ENCODE measurements at regions of chr7 and their contacts with region 1.

Region 1: GRCh38 chr7:150378853-150379440 is at the start of gene ZNF775:
- DNase-seq: peak; percentile 90
- ATAC-seq: peak; percentile 93
- H3K4me3 Mint-ChIP-seq: peak within 1 kb of the TSS; percentile 90
- H3K27ac Mint-ChIP-seq: peak within 1 kb of the TSS; percentile 88
- H3K4me1 Mint-ChIP-seq: peaks cover 80% of the 10 kb centered on the region
- H3K27me3 Mint-ChIP-seq: no peaks in the 10 kb centered on the region
- CTCF ChIP-seq: no peak
- total RNA-seq, gene ZNF775: 8.0 and 8.8 TPM in 2 replicates

Region 2: GRCh38 chr7:149822353-149822943 is 556.5 kb before region 1 on chr7:
- CTCF ChIA-PET with region 1: no interaction called
- POLR2A ChIA-PET with region 1: no interaction called
- intact Hi-C with region 1: no loop called
- DNase-seq: no peak
- ATAC-seq: no peak
- H3K4me3 Mint-ChIP-seq: no peak overlapping the region
- H3K27ac Mint-ChIP-seq: no peak overlapping the region
- H3K4me1 Mint-ChIP-seq: no peaks in the 10 kb centered on the region
- H3K27me3 Mint-ChIP-seq: no peaks in the 10 kb centered on the region
- CTCF ChIP-seq: no peak

Region 3: DNA sequence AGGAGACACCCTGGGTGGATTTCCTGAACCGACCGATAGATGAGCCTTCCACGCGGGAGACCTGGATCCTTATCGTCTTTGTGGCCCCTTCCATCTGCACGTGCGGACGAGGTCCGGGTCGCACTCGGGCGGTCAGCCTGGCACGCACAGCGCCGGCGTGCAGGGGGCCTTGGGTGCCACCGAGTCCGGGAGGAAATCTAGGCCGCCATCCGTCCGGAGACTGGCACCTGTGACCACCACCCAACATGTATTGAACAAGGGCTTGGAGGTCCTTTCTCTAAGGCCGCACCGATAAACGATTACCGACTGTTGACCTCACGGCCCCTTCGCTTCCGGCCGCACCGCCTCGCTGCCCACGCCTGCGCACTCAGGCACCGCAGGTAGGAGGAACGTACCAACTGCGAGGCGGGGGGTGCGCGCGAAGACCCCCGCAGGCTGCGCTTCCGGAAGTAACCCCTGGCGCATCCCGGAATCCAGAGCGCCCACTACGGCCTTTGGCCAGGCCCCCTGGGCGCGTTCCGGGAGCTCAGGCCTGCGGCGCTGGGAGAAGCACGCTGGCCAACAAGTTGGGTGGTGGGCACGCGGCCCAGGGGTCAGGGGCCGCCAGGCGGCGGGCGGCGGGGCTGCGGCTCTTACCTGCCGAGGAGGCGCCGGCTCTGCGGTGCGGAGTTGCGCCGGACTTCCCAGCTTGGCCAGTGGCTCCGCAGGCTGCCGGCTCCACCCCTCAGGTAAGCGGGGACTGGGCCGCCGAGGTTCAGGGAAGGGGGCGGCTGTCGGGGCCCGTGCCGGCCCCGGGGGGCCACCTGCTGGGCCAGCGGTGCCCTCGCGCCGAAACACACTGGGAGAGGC is 55.9 kb before region 1 on chr7 and contains the starts of genes ACTR3C and LRRC61:
- CTCF ChIA-PET with region 1: no interaction called
- POLR2A ChIA-PET with region 1: interaction called, 9 read pairs
- intact Hi-C with region 1: loop called (anchors 1 kb)
- DNase-seq: peak; percentile 64
- ATAC-seq: peak; percentile 67
- H3K4me3 Mint-ChIP-seq: peak within 1 kb of the TSS; percentile 93
- H3K27ac Mint-ChIP-seq: peak within 1 kb of the TSS; percentile 92
- H3K4me1 Mint-ChIP-seq: peaks cover 54% of the 10 kb centered on the region
- H3K27me3 Mint-ChIP-seq: no peaks in the 10 kb centered on the region
- CTCF ChIP-seq: no peak
- total RNA-seq, gene ACTR3C: 10.1 and 14.3 TPM in 2 replicates
- total RNA-seq, gene LRRC61: 10.7 and 11.0 TPM in 2 replicates

Region 4: GRCh38 chr7:150368096-150368883 is 10.7 kb before region 1 on chr7 and contains the start of gene REPIN1:
- CTCF ChIA-PET with region 1: interaction called, 6 read pairs
- POLR2A ChIA-PET with region 1: interaction called, 188 read pairs
- intact Hi-C with region 1: loop called (anchors 1 kb)
- DNase-seq: peak; percentile 85
- ATAC-seq: peak; percentile 43
- H3K4me3 Mint-ChIP-seq: peak within 1 kb of the TSS; percentile 95
- H3K27ac Mint-ChIP-seq: peak within 1 kb of the TSS; percentile 95
- H3K4me1 Mint-ChIP-seq: peaks cover 72% of the 10 kb centered on the region
- H3K27me3 Mint-ChIP-seq: no peaks in the 10 kb centered on the region
- CTCF ChIP-seq: no peak
- total RNA-seq, gene REPIN1: 106 and 116 TPM in 2 replicates

Region 5: GRCh38 chr7:150435390-150436073 is 56.6 kb after region 1 on chr7:
- CTCF ChIA-PET with region 1: no interaction called
- POLR2A ChIA-PET with region 1: interaction called, 4 read pairs
- intact Hi-C with region 1: loop called (anchors 1 kb)
- DNase-seq: peak; percentile 74
- ATAC-seq: peak; percentile 92
- H3K4me3 Mint-ChIP-seq: peak overlapping the region; percentile 73
- H3K27ac Mint-ChIP-seq: peak overlapping the region; percentile 96
- H3K4me1 Mint-ChIP-seq: peaks cover 63% of the 10 kb centered on the region
- H3K27me3 Mint-ChIP-seq: peaks cover 2% of the 10 kb centered on the region
- CTCF ChIP-seq: no peak

Region 6: DNA sequence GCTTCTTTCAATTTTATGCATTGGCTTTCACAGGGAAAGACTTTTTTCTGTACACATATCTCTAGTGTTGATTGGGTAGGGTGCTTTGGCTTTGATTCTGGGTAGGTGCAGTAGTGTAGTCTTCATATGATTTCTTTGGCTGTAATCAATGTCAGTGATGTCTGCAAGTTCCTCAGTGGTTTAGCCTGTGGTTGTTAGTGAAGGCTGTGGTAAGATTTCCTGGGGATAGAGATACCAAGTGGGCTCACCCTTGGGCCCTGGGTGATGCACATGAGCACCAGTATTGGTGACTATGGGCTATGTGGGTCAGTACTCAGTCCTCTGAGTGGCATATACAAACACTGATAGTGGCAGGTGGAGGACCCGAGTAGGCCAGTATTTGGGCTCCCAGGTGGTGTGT is 84.5 kb after region 1 on chr7:
- CTCF ChIA-PET with region 1: no interaction called
- POLR2A ChIA-PET with region 1: no interaction called
- intact Hi-C with region 1: no loop called
- DNase-seq: no peak
- ATAC-seq: no peak
- H3K4me3 Mint-ChIP-seq: no peak overlapping the region
- H3K27ac Mint-ChIP-seq: no peak overlapping the region
- H3K4me1 Mint-ChIP-seq: no peaks in the 10 kb centered on the region
- H3K27me3 Mint-ChIP-seq: peaks cover 3% of the 10 kb centered on the region
- CTCF ChIP-seq: no peak

Region 7: GRCh38 chr7:151080522-151081169 is 701.7 kb after region 1 on chr7 and contains the start of gene FASTK:
- CTCF ChIA-PET with region 1: no interaction called
- POLR2A ChIA-PET with region 1: no interaction called
- intact Hi-C with region 1: loop called (anchors 2 kb)
- DNase-seq: peak; percentile 81
- ATAC-seq: peak; percentile 83
- H3K4me3 Mint-ChIP-seq: peak within 1 kb of the TSS; percentile 91
- H3K27ac Mint-ChIP-seq: peak within 1 kb of the TSS; percentile 70
- H3K4me1 Mint-ChIP-seq: peaks cover 49% of the 10 kb centered on the region
- H3K27me3 Mint-ChIP-seq: peaks cover 8% of the 10 kb centered on the region
- CTCF ChIP-seq: no peak
- total RNA-seq, gene FASTK: 97.6 and 103 TPM in 2 replicates

Measured in activated B cell treated with CpG ODN at 0.5 μM for 24 hours (primary cell).